Psoas muscle (tissue), 8 donors: ENCODE measurements at regions of chr2 and their contacts with region 1.

Region 1: GRCh38 chr2:215983581-215984351 is 29.6 kb downstream of the MREG start:
- DNase-seq: no peak
- ATAC-seq: peak in 1 of 4 donors; percentile 68
- H3K4me3 ChIP-seq: no peak overlapping the region
- H3K27ac ChIP-seq: no peak overlapping the region
- H3K4me1 ChIP-seq: no peaks in the 10 kb centered on the region
- H3K27me3 ChIP-seq: no peaks in the 10 kb centered on the region
- CTCF ChIP-seq: no peak

Region 2: GRCh38 chr2:215970425-215970824 is 13.3 kb before region 1 on chr2:
- intact Hi-C with region 1: loop called in 1 of 2 experiments (anchors 2 kb)
- DNase-seq: no peak
- ATAC-seq: no peak
- H3K4me3 ChIP-seq: no peak overlapping the region
- H3K27ac ChIP-seq: no peak overlapping the region
- H3K4me1 ChIP-seq: peaks cover 17% of the 10 kb centered on the region
- H3K27me3 ChIP-seq: no peaks in the 10 kb centered on the region
- CTCF ChIP-seq: no peak